ENCODE measurements at regions of chr16 and their contacts with region 1.

Region 1: GRCh38 chr16:19886073-19886941 is 1.7 kb upstream of the GPRC5B start:
- DNase-seq: peak; percentile 84
- ATAC-seq: peak; percentile 43

Region 2: DNA sequence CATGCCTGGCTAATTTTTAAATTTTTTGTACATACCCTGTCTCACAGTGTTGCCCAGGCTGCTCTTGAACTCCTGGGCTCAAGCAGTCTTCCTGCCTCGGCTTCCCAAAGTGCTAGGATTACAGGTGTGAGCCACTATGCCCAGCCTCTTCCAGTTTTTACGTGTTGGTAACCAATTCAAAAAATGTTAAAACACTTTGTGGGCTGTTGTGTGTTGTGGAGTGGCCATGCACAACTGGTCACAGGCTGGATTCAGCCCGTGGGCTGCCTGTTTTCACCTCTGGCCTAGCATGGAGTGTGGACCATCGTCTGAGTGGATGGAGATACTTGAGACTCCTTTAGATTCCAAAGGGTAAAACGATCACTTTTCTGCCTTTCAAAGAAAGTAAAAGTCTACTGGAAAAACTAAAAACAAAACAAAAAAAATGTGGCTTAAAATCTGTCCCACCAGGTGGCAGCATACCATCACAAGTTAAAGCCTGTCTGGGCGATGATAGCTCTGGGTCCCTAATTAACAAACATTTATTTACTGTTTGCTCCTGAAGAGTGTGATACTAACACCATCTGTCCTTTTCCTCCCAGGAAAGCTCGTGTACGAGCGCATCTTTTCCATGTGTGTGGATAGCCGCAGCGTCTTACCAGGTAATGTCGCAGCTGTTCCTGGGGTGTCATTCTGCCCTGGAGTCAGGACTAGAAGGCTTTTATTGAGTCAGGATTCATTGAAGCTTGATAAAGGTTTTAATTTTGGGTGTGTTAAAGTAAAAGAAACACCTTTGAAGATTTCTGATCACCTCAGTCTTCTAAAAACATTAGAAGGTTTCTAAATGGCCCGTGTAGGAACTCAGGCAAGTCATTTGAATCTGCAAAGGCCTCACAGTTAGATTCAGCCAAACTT is 285.0 kb before region 1 on chr16:
- intact Hi-C with region 1: loop called (anchors 1 kb)
- DNase-seq: no peak
- ATAC-seq: peak; percentile 21

Region 3: GRCh38 chr16:19745286-19746010 is 140.9 kb before region 1 on chr16:
- intact Hi-C with region 1: no loop called
- DNase-seq: no peak
- ATAC-seq: no peak